Heart left ventricle (tissue), 16 donors: ENCODE measurements at regions of chr11 and their contacts with region 1.

Region 1: GRCh38 chr11:34468209-34468841 is 29.6 kb downstream of the CAT start:
- DNase-seq: no peak
- ATAC-seq: no peak
- H3K4me3 ChIP-seq: no peak overlapping the region
- H3K27ac ChIP-seq: no peak overlapping the region
- H3K4me1 ChIP-seq: no peaks in the 10 kb centered on the region
- H3K27me3 ChIP-seq: no peaks in the 10 kb centered on the region
- CTCF ChIP-seq: peak; percentile 24 to 61 (median 42)
- POLR2A ChIP-seq: no peak

Region 2: GRCh38 chr11:34086554-34087283 is 381.6 kb before region 1 on chr11:
- intact Hi-C with region 1: loop called in 1 of 10 experiments (anchors 10 kb)
- DNase-seq: no peak
- ATAC-seq: no peak
- H3K4me3 ChIP-seq: no peak overlapping the region
- H3K27ac ChIP-seq: peak overlapping the region in 1 of 12 donors; percentile 11
- H3K4me1 ChIP-seq: no peaks in the 10 kb centered on the region
- H3K27me3 ChIP-seq: no peaks in the 10 kb centered on the region
- CTCF ChIP-seq: no peak
- POLR2A ChIP-seq: no peak

Region 3: DNA sequence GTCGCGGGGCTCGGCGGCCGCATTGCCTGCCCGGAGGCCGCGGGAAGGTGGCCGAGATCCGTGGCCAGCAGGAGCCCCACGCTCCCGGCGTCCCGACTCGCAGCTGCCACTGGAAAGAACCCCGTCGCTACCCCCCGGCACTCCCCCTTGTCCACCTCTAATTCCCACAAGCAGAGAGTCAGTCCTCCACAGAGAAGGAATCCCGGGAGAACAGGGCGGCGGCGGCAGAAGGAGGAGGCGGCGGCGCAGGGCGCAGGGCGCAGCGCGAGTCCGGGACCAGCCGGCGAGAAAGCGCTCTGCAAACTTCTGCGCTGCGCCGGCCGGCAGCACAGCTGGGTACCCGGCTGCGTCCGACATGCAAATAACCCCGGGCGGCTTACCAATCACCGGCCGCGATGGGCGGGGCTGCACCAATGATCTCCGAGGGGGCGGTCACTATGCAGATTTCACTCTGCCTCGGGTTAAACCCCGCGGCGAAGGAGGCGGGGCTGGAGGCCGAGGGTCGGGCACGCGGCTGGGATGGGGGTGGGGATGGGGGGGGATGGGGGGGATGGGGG is 110.5 kb before region 1 on chr11 and contains the start of gene ABTB2:
- intact Hi-C with region 1: no loop called
- DNase-seq: peak; percentile 98 to 99 (median 98)
- ATAC-seq: peak; percentile 93 to 96 (median 95)
- H3K4me3 ChIP-seq: peak within 1 kb of the TSS; percentile 42 to 84 (median 64)
- H3K27ac ChIP-seq: peak within 1 kb of the TSS; percentile 62 to 89 (median 79)
- H3K4me1 ChIP-seq: peaks cover 0 to 44% (median 30%) of the 10 kb centered on the region in 12 donors
- H3K27me3 ChIP-seq: peaks cover 0 to 22% (median 6%) of the 10 kb centered on the region in 9 donors
- CTCF ChIP-seq: no peak
- POLR2A ChIP-seq: peak; percentile 76 to 99
- total RNA-seq, gene ABTB2: 9.0 to 26.3 (median 12.5) TPM